Activated T-helper 1 cell treated with anti-CD3 and anti-CD28 coated beads, Interleukin-12 subunit alpha, Interleukin-12 subunit beta, Interleukin-2, Interleukin-4 antibody, amounts not matched to agents 30 ng/mL and 10 ng/mL and 1 ng/mL, durations not matched to agents 14 hours and 24 hours and 36 hours (primary cell): ENCODE measurements at regions of chr10 and their contacts with region 1.

Region 1: GRCh38 chr10:35355971-35356724 is 19.8 kb downstream of the CCNY start:
- DNase-seq: no peak
- H3K4me3 Mint-ChIP-seq: peak overlapping the region; percentile 71
- H3K27ac Mint-ChIP-seq: peak overlapping the region; percentile 93
- H3K4me1 Mint-ChIP-seq: peaks cover 67% of the 10 kb centered on the region
- H3K27me3 Mint-ChIP-seq: no peaks in the 10 kb centered on the region

Region 2: DNA sequence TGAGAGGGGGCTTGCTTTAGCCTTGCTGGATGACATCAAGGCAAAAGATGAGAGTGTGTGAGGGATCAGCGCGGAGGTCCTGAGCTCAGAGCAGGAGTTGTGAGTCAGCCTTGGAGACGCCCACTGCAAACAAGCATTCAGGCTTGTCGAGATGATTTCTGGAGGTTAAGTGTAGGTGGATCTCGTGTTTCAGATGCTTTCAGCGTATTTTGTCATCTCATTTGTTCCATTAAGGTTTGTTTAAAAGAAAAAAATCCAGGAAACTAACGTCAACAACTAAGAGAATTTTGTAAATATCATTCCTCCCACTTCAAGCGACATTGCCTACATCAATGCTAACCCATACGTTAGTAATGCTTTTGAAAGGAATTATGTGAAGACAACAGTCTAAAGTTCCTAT is 1306.3 kb before region 1 on chr10:
- intact Hi-C with region 1: no loop called
- DNase-seq: no peak
- H3K4me3 Mint-ChIP-seq: no peak overlapping the region
- H3K27ac Mint-ChIP-seq: peak overlapping the region; percentile 40
- H3K4me1 Mint-ChIP-seq: peaks cover 26% of the 10 kb centered on the region
- H3K27me3 Mint-ChIP-seq: no peaks in the 10 kb centered on the region

Region 3: GRCh38 chr10:35126530-35127296 is 229.4 kb before region 1 on chr10 and contains the start of gene CREM:
- intact Hi-C with region 1: loop called (anchors 1 kb)
- DNase-seq: peak; percentile 97
- H3K4me3 Mint-ChIP-seq: peak within 1 kb of the TSS; percentile 94
- H3K27ac Mint-ChIP-seq: peak within 1 kb of the TSS; percentile 93
- H3K4me1 Mint-ChIP-seq: peaks cover 66% of the 10 kb centered on the region
- H3K27me3 Mint-ChIP-seq: no peaks in the 10 kb centered on the region
- total RNA-seq, gene CREM: 101 and 106 TPM in 2 replicates

Region 4: GRCh38 chr10:35218339-35218955 is 137.7 kb before region 1 on chr10:
- intact Hi-C with region 1: loop called (anchors 1 kb)
- DNase-seq: peak; percentile 73
- H3K4me3 Mint-ChIP-seq: peak overlapping the region; percentile 74
- H3K27ac Mint-ChIP-seq: peak overlapping the region; percentile 95
- H3K4me1 Mint-ChIP-seq: peaks cover 61% of the 10 kb centered on the region
- H3K27me3 Mint-ChIP-seq: no peaks in the 10 kb centered on the region

Region 5: GRCh38 chr10:35409094-35409582 is 53.0 kb after region 1 on chr10:
- intact Hi-C with region 1: loop called (anchors 1 kb)
- DNase-seq: no peak
- H3K4me3 Mint-ChIP-seq: no peak overlapping the region
- H3K27ac Mint-ChIP-seq: no peak overlapping the region
- H3K4me1 Mint-ChIP-seq: peaks cover 8% of the 10 kb centered on the region
- H3K27me3 Mint-ChIP-seq: peaks cover 1% of the 10 kb centered on the region

Region 6: DNA sequence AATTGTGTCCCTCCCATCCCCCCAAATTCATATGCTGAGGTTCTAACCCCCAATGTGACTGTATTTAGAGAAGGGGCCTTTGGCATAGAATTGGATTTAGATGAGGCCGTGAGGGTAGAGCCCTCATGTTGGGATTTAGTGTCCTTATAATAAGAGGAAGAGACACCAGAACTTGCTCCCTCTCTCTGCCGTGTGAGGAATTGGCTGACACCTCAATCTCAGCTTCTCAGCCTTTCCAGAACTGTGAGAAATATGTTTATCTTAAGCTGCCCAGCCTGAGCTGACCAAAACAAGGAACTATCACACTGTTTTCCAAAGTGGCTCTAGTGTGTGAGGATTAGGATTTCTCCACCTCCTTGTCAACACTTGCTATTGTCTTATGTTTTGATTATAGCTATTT is 686.0 kb after region 1 on chr10:
- intact Hi-C with region 1: no loop called
- DNase-seq: no peak
- H3K4me3 Mint-ChIP-seq: no peak overlapping the region
- H3K27ac Mint-ChIP-seq: no peak overlapping the region
- H3K4me1 Mint-ChIP-seq: no peaks in the 10 kb centered on the region
- H3K27me3 Mint-ChIP-seq: no peaks in the 10 kb centered on the region